ENCODE measurements at regions of chr2 and their contacts with region 1.

Region 1: GRCh38 chr2:5036256-5036655 is 655.9 kb upstream of the SOX11 start:
- DNase-seq: no peak
- H3K4me3 ChIP-seq: no peak overlapping the region
- H3K27ac ChIP-seq: no peak overlapping the region
- H3K4me1 ChIP-seq: no peaks in the 10 kb centered on the region
- H3K27me3 ChIP-seq: no peaks in the 10 kb centered on the region
- CTCF ChIP-seq: no peak

Region 2: DNA sequence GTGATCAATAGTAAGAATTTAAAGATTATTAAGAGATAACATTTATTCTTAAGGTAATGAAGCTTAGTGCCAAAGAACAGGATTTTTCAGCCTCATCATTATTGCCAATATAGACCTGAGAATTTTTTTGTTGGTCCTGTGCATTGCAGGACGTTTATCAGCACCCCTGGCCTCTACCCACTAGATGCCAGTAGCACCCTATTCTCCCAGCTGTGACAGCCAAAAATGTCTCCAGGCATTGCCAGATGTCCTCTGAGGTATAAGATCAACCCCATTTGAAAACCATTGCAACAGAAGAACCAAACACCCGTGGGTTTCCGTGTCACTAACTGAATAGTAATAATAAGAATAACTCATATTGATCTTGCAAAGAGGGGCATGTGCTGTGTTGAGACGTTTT is 44.0 kb before region 1 on chr2:
- intact Hi-C with region 1: loop called (anchors 2 kb)
- DNase-seq: no peak
- H3K4me3 ChIP-seq: no peak overlapping the region
- H3K27ac ChIP-seq: no peak overlapping the region
- H3K4me1 ChIP-seq: no peaks in the 10 kb centered on the region
- H3K27me3 ChIP-seq: no peaks in the 10 kb centered on the region
- CTCF ChIP-seq: no peak

Region 3: GRCh38 chr2:5077439-5078089 is 41.3 kb after region 1 on chr2:
- intact Hi-C with region 1: no loop called
- DNase-seq: no peak
- H3K4me3 ChIP-seq: no peak overlapping the region
- H3K27ac ChIP-seq: no peak overlapping the region
- H3K4me1 ChIP-seq: no peaks in the 10 kb centered on the region
- H3K27me3 ChIP-seq: no peaks in the 10 kb centered on the region
- CTCF ChIP-seq: no peak

Region 4: DNA sequence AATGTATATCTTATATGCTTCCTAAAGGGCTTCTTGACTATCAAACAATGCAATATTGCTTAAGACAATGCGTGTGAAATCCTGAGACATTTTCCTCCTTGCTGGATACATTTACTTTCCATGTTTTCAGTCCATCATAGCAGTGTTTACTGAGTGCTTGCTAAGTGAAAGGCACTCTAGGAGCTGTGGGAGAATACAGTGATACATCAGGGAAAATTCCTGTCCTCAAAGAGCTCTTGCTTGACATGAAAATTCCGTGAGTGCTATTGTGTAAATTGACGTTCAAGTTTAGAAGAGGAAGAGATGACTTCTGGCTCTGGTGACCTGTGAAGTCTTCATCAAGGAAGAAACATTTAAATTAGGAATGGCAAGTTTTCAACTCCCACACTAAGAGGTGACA is 206.5 kb after region 1 on chr2:
- intact Hi-C with region 1: no loop called
- DNase-seq: no peak
- H3K4me3 ChIP-seq: no peak overlapping the region
- H3K27ac ChIP-seq: no peak overlapping the region
- H3K4me1 ChIP-seq: no peaks in the 10 kb centered on the region
- H3K27me3 ChIP-seq: no peaks in the 10 kb centered on the region
- CTCF ChIP-seq: no peak

Region 5: GRCh38 chr2:5365871-5366461 is 329.7 kb after region 1 on chr2:
- intact Hi-C with region 1: no loop called
- DNase-seq: peak; percentile 32
- H3K4me3 ChIP-seq: no peak overlapping the region
- H3K27ac ChIP-seq: no peak overlapping the region
- H3K4me1 ChIP-seq: no peaks in the 10 kb centered on the region
- H3K27me3 ChIP-seq: no peaks in the 10 kb centered on the region
- CTCF ChIP-seq: no peak

Measured in colonic mucosa (tissue), 4 donors.